AG04450 (cell line): ENCODE measurements at regions of chr5 and their contacts with region 1.

Region 1: DNA sequence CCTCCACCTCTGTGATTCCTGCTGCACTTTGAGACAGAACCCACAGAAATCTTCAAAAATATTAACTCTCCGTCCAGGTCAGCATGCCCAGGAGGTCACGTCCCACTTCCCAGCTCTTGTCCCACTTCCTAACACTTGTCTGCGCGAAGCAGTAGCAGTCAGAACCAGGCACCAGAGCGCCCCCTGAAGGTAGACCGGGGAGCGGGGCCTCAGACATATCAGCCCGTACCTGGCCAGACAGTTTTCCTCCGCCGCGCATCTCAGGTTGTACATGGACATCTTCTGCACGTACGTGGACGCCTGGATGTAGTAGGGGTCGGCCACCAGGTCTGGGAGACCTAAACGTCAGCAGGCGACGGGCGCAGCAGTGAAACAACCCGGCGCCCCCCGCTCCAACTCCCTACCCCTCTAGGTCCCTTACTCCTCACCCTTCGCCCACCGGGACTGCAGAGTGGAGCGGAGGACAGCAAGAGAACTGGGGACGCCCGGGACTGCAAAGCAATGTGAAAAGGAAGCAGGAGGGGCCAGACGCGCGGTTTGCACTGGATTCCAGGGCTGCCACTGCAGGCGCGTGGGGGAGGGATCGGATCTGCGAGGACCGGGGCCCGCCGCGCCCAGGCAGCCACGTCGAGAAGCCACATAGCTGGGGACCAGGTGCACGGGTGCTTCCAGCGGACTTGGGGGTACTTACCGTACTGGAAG is 1.2 kb downstream of the LOX start:
- DNase-seq: no peak
- H3K4me3 ChIP-seq: peak overlapping the region; percentile 92
- H3K27ac ChIP-seq: peak overlapping the region; percentile 97
- H3K27me3 ChIP-seq: no peaks in the 10 kb centered on the region
- CTCF ChIP-seq: peak; percentile 93

Region 2: DNA sequence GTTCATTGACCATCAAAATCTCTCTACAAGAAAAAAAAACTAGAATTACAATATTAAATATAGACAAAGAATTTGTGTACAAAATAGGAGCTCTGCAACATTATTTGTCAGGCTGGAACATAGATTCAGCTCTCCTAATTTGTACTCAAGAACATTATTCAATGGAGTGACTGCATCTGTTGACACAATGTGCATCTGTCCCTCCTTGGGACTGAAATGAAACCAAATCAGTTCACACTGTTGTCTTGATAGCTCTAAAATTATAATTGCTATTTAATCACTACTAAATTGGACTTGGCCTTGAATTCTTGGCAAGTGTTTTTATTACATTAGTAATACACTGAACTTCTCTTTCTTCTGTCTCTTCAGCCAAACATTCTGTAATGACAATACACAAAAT is 177.5 kb before region 1 on chr5:
- CTCF ChIA-PET with region 1: no interaction called
- POLR2A ChIA-PET with region 1: no interaction called
- DNase-seq: no peak
- H3K4me3 ChIP-seq: no peak overlapping the region
- H3K27ac ChIP-seq: no peak overlapping the region
- H3K27me3 ChIP-seq: no peaks in the 10 kb centered on the region
- CTCF ChIP-seq: no peak

Region 3: DNA sequence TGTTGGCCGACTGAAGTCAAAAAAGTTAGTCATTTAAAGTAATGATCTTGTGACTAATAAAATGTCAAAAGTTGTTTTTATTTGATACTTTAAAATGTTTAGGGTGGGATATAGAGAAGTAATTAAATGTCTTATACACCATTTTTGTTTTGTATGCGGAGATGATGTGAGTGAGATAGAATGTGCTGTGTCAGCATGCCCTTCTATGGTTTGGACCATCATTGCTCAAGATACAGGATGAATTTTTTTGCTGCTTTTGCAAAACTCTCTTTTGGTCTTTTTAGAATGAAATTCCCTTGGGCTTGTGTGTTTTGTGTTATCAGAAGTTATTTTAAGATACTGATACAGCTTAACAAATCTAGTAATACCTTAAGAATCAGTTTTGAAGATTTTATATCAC is 102.6 kb before region 1 on chr5:
- CTCF ChIA-PET with region 1: interaction called, 26 read pairs
- POLR2A ChIA-PET with region 1: interaction called, 52 read pairs
- DNase-seq: no peak
- H3K4me3 ChIP-seq: no peak overlapping the region
- H3K27ac ChIP-seq: no peak overlapping the region
- H3K27me3 ChIP-seq: no peaks in the 10 kb centered on the region
- CTCF ChIP-seq: no peak

Region 4: DNA sequence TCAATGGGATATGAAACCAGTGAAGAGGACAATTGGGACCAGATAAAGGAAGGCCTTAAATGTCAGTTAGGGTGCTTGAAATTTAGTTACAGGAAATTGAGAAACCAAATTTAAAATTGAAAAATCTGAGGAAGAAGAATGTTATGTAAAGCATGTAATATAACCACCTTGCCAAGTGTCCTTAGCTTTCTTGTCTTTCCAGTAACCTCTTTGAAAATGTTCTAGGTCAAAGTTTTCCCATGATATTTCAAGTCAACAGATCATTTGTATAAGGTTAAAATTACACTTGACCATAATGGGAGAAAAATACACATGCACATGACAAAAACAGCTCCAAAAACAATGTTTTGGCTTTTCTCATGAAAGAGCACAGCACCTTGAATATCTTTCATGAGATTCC is 19.9 kb before region 1 on chr5:
- CTCF ChIA-PET with region 1: interaction called, 48 read pairs
- POLR2A ChIA-PET with region 1: no interaction called
- DNase-seq: no peak
- H3K4me3 ChIP-seq: no peak overlapping the region
- H3K27ac ChIP-seq: no peak overlapping the region
- H3K27me3 ChIP-seq: no peaks in the 10 kb centered on the region
- CTCF ChIP-seq: no peak

Region 5: GRCh38 chr5:122091936-122092600 is 15.3 kb after region 1 on chr5:
- CTCF ChIA-PET with region 1: interaction called, 105 read pairs
- POLR2A ChIA-PET with region 1: interaction called, 20 read pairs
- DNase-seq: no peak
- H3K4me3 ChIP-seq: no peak overlapping the region
- H3K27ac ChIP-seq: no peak overlapping the region
- H3K27me3 ChIP-seq: no peaks in the 10 kb centered on the region
- CTCF ChIP-seq: peak; percentile 56

Region 6: DNA sequence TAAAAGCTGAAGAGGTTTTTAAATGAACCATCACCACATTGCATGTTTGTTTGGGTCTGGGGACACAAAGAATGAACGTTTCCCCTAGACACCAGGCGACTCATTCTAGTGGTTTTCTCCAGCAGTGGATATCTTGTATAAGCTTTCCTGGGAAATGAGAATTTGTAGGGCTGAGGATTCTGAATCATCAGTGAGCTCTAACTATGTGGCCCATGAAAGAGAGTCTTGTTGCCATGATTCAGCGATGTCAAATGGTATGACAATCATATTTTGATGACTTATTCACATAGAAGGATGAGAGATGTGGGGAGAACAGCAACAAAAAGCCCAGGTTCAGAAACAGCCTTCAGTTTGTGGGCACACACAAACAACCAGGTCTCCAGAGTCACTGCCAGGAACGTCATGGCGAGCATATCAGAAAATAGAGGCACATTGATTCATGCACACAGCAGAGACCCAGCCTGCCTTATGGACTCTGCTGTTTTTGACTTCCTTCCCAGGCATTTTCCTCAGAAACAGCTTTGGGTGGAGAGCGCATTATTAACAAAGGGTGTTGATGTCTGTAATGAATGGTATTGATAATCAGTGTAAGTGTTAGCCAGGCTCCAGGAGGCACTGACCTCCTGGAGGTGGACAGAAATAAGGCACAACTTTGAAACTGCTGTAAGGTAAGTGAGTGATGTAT is 65.8 kb after region 1 on chr5:
- CTCF ChIA-PET with region 1: interaction called, 10 read pairs
- POLR2A ChIA-PET with region 1: interaction called, 3 read pairs
- DNase-seq: no peak
- H3K4me3 ChIP-seq: no peak overlapping the region
- H3K27ac ChIP-seq: peak overlapping the region; percentile 22
- H3K27me3 ChIP-seq: no peaks in the 10 kb centered on the region
- CTCF ChIP-seq: no peak

Region 7: GRCh38 chr5:122163121-122164069 is 86.6 kb after region 1 on chr5:
- CTCF ChIA-PET with region 1: interaction called, 18 read pairs
- POLR2A ChIA-PET with region 1: interaction called, 9 read pairs
- DNase-seq: peak; percentile 73
- H3K4me3 ChIP-seq: peak overlapping the region; percentile 8; the same call in 1 of the 2 replicates
- H3K27ac ChIP-seq: peak overlapping the region; percentile 90
- H3K27me3 ChIP-seq: no peaks in the 10 kb centered on the region
- CTCF ChIP-seq: no peak